CD14-positive monocyte (primary cell): ENCODE measurements at regions of chr7 and their contacts with region 1.

Region 1: DNA sequence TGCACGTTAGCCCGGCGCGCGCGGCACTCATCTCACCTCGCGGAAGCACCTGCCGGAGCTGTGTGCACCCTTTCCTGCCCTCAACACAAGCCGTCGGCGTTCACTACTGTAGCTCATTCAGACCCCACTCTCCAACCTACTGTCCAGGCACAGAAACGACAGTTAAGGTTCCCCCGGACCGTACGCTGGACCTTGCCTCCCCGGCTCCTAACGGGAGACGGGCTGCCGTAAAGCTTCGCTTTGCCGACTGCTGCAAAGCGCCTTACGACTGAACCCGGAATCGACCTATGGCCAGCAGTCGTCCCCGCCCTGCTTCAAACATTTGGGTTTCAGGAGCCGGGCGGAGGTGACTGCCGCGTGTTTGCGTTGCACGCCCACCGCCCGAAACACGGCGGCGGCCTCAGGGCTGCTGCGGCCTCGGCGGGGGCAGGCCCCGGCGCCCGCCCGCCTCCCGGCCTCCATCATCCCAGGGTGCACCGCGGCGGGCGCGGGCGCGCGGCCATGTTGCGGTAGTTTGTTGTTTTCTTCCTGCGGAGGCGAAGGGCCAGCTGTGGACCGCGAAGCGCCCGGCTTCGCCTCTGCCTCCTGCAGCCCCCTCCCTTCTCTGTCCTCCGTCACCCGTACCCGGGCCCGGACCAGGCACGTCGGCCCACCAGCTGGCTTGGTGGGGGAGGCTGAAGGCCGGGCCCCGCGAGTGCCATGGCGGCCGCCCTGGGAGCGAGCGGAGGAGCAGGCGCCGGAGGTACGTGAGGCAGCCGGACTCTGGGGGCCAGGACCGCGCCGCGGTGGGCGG is at the start of gene RBM33:
- DNase-seq: peak; percentile 64 to 66 (median 66)
- H3K4me3 ChIP-seq: peak within 1 kb of the TSS; percentile 85 to 97 (median 94)
- H3K4me3 Mint-ChIP-seq: peak within 1 kb of the TSS; percentile 98 to 99
- H3K27ac ChIP-seq: peak within 1 kb of the TSS; percentile 77 to 98
- H3K27ac Mint-ChIP-seq: peak within 1 kb of the TSS; percentile 90 to 100 (median 98)
- H3K4me1 ChIP-seq: peaks cover 15 to 25% of the 10 kb centered on the region in 2 donors
- H3K4me1 Mint-ChIP-seq: peaks cover 26% of the 10 kb centered on the region
- H3K27me3 ChIP-seq: no peaks in the 10 kb centered on the region
- H3K27me3 Mint-ChIP-seq: no peaks in the 10 kb centered on the region
- CTCF ChIP-seq: no peak
- polyA plus RNA-seq, gene RBM33: 15.0 to 27.7 (median 22.2) TPM

Region 2: DNA sequence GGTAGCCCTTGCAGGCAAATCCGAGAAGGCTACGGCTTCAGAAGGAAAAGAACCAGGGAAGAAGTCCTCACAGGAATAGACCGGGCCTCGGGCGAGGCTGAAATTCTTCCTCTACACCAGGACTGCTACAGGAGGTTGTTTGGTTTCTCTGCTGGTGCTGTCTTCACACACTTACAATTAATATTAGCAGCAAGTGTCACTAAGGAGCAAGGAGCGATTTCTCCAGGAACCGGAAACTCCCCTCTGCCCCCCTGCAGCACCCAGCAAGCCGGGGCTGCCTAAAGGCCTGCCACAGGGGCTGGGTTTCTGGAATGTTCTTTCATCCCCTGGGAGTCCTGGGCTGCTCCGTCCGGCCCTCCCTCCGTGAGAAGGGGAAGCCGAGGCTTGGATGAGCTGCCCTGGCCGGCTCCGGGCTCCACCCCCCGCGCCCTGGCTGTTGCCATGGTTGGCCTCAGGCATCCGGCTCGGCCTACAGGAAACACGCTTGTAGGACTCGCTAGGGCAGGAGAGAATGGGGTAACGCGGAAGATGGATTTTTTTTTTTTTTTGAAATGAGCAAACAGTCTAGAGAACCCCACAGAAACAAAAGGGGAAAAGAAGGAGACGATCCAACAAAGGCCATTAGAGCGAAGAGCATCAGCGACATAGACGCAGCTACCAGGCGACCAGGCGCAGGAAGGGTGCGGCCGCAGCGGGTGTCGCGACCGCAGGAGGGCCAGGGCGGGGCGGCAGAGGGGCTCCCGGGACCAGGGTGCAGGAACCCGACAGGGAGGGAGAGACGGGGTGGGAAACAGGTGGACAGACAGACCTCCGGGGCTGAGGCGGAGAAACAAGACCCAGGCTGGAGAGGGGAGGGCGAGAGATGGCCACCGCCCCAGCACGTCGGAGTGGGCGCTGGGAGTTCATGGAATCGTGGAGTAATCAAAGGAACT is 153.4 kb before region 1 on chr7:
- intact Hi-C with region 1: no loop called
- DNase-seq: peak; percentile 23 to 39 (median 28)
- H3K4me3 ChIP-seq: peak overlapping the region; percentile 27 to 72 (median 35)
- H3K4me3 Mint-ChIP-seq: peak overlapping the region; percentile 82 to 97
- H3K27ac ChIP-seq: no peak overlapping the region
- H3K27ac Mint-ChIP-seq: peak overlapping the region in 2 of 7 donors; percentile 26 to 45
- H3K4me1 ChIP-seq: peaks cover 20 to 21% of the 10 kb centered on the region in 2 donors
- H3K4me1 Mint-ChIP-seq: peaks cover 23% of the 10 kb centered on the region
- H3K27me3 ChIP-seq: peaks cover 0 to 60% of the 10 kb centered on the region in 2 donors
- H3K27me3 Mint-ChIP-seq: peaks cover 38 to 80% (median 45%) of the 10 kb centered on the region in 3 donors
- CTCF ChIP-seq: no peak

Region 3: GRCh38 chr7:155590215-155591018 is 54.0 kb before region 1 on chr7:
- intact Hi-C with region 1: loop called (anchors 5 to 10 kb)
- DNase-seq: peak; percentile 95 to 99 (median 95)
- H3K4me3 ChIP-seq: peak overlapping the region in 1 of 3 experiments; percentile 40
- H3K4me3 Mint-ChIP-seq: peak overlapping the region; percentile 24 to 39
- H3K27ac ChIP-seq: peak overlapping the region; percentile 84 to 86
- H3K27ac Mint-ChIP-seq: peak overlapping the region; percentile 94 to 99 (median 98)
- H3K4me1 ChIP-seq: peaks cover 77 to 90% of the 10 kb centered on the region in 2 donors
- H3K4me1 Mint-ChIP-seq: peaks cover 83% of the 10 kb centered on the region
- H3K27me3 ChIP-seq: no peaks in the 10 kb centered on the region
- H3K27me3 Mint-ChIP-seq: peaks cover 0 to 1% (median 0%) of the 10 kb centered on the region in 3 donors
- CTCF ChIP-seq: no peak

Region 4: GRCh38 chr7:155598810-155599210 is 45.6 kb before region 1 on chr7:
- intact Hi-C with region 1: loop called (anchors 5 to 10 kb)
- DNase-seq: peak; percentile 56 to 69 (median 64)
- H3K4me3 ChIP-seq: no peak overlapping the region
- H3K4me3 Mint-ChIP-seq: peak overlapping the region in 1 of 2 donors; percentile 66
- H3K27ac ChIP-seq: no peak overlapping the region
- H3K27ac Mint-ChIP-seq: no peak overlapping the region
- H3K4me1 ChIP-seq: peaks cover 37 to 39% of the 10 kb centered on the region in 2 donors
- H3K4me1 Mint-ChIP-seq: peaks cover 40% of the 10 kb centered on the region
- H3K27me3 ChIP-seq: no peaks in the 10 kb centered on the region
- H3K27me3 Mint-ChIP-seq: peaks cover 5 to 28% (median 6%) of the 10 kb centered on the region in 3 donors
- CTCF ChIP-seq: peak; percentile 94

Region 5: DNA sequence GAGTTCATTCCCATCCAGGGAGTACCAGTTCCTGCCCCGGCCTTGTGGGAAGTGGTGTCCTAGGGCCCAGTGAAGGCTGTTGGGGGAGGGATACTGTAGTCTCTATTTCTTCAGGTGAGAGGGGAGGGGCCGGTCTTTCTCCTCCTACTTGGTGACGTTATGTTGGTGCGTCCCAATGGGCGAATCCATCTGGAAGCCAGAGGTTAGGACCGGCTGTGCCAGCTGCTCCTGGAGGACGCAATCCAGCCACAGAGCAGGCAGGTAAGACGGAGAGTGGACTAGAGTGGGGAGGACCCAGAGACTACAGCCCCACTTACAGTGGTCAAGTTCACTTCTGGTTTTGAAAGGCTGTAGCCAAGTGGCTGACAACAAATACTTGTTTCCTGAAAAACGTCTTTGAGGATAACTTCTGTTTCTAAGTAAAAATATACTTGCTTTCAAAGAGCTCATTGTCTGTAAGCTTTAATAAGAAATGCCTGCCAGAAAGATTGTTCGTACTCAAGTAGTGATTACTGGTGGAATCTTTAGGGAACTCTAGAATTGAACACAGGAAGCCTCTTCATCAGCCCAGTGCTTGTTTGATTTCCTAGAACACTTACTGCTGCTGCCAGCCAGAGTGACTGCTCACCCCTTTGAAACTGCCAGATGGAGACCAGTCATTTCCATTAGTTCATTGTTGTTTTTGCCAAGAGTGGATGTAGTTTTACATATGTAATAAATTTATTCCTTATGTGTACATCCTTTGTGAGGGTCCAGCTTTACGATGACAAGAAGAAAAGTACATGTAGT is 25.5 kb after region 1 on chr7:
- intact Hi-C with region 1: no loop called
- DNase-seq: no peak
- H3K4me3 ChIP-seq: no peak overlapping the region
- H3K4me3 Mint-ChIP-seq: no peak overlapping the region
- H3K27ac ChIP-seq: peak overlapping the region in 1 of 2 donors; percentile 38
- H3K27ac Mint-ChIP-seq: peak overlapping the region in 6 of 7 donors; percentile 9 to 60 (median 54)
- H3K4me1 ChIP-seq: no peaks in the 10 kb centered on the region
- H3K4me1 Mint-ChIP-seq: peaks cover 11% of the 10 kb centered on the region
- H3K27me3 ChIP-seq: no peaks in the 10 kb centered on the region
- H3K27me3 Mint-ChIP-seq: no peaks in the 10 kb centered on the region
- CTCF ChIP-seq: no peak